Caco-2 (cell line): ENCODE measurements at regions of chr11 and their contacts with region 1.

Region 1: DNA sequence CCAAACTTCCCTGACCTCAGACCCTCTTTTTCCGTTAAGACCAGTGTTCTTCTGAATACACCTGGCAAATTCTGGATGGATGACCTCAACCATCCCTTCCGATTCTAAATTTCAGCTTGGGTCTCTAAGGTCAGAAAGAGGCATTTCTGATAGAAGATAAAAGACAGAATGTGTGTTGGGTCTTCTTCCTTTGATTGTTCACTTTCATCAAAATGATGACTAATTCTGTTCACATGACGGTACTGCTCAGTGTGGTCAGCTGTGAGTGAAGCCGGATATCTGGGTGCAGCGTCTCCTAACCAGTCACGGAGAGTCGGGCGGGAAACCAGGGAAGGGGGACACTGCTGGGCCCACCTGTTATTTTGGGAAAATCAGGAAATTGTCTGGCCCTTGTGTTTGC is 151.6 kb upstream of the NAV2 start:
- DNase-seq: no peak
- H3K4me3 ChIP-seq: no peak overlapping the region
- H3K4me3 Mint-ChIP-seq: no peak overlapping the region
- H3K27ac Mint-ChIP-seq: no peak overlapping the region
- H3K4me1 ChIP-seq: peaks cover 2% of the 10 kb centered on the region; the same call in 1 of the 2 replicates
- H3K4me1 Mint-ChIP-seq: peaks cover 2% of the 10 kb centered on the region
- H3K27me3 ChIP-seq: no peaks in the 10 kb centered on the region
- H3K27me3 Mint-ChIP-seq: no peaks in the 10 kb centered on the region
- CTCF ChIP-seq: no peak

Region 2: GRCh38 chr11:19511413-19512183 is 49.4 kb before region 1 on chr11:
- CTCF ChIA-PET with region 1: no interaction called
- POLR2A ChIA-PET with region 1: no interaction called
- intact Hi-C with region 1: no loop called
- DNase-seq: no peak
- H3K4me3 ChIP-seq: no peak overlapping the region
- H3K4me3 Mint-ChIP-seq: no peak overlapping the region
- H3K27ac Mint-ChIP-seq: no peak overlapping the region
- H3K4me1 ChIP-seq: peaks cover 36% of the 10 kb centered on the region
- H3K4me1 Mint-ChIP-seq: peaks cover 28% of the 10 kb centered on the region
- H3K27me3 ChIP-seq: no peaks in the 10 kb centered on the region
- H3K27me3 Mint-ChIP-seq: no peaks in the 10 kb centered on the region
- CTCF ChIP-seq: no peak

Region 3: GRCh38 chr11:19658344-19658743 is 97.3 kb after region 1 on chr11:
- CTCF ChIA-PET with region 1: interaction called, 5 read pairs
- POLR2A ChIA-PET with region 1: no interaction called
- intact Hi-C with region 1: loop called (anchors 5 kb)
- DNase-seq: no peak
- H3K4me3 ChIP-seq: no peak overlapping the region
- H3K4me3 Mint-ChIP-seq: no peak overlapping the region
- H3K27ac Mint-ChIP-seq: no peak overlapping the region
- H3K4me1 ChIP-seq: no peaks in the 10 kb centered on the region
- H3K4me1 Mint-ChIP-seq: no peaks in the 10 kb centered on the region
- H3K27me3 ChIP-seq: no peaks in the 10 kb centered on the region
- H3K27me3 Mint-ChIP-seq: no peaks in the 10 kb centered on the region
- CTCF ChIP-seq: no peak

Region 4: GRCh38 chr11:19742588-19743292 is 181.7 kb after region 1 on chr11:
- CTCF ChIA-PET with region 1: interaction called, 12 read pairs
- POLR2A ChIA-PET with region 1: no interaction called
- intact Hi-C with region 1: loop called (anchors 1 kb)
- DNase-seq: peak; percentile 82 to 84
- H3K4me3 ChIP-seq: no peak overlapping the region
- H3K4me3 Mint-ChIP-seq: no peak overlapping the region
- H3K27ac Mint-ChIP-seq: no peak overlapping the region
- H3K4me1 ChIP-seq: no peaks in the 10 kb centered on the region
- H3K4me1 Mint-ChIP-seq: no peaks in the 10 kb centered on the region
- H3K27me3 ChIP-seq: no peaks in the 10 kb centered on the region
- H3K27me3 Mint-ChIP-seq: no peaks in the 10 kb centered on the region
- CTCF ChIP-seq: peak; percentile 77 to 86

Region 5: DNA sequence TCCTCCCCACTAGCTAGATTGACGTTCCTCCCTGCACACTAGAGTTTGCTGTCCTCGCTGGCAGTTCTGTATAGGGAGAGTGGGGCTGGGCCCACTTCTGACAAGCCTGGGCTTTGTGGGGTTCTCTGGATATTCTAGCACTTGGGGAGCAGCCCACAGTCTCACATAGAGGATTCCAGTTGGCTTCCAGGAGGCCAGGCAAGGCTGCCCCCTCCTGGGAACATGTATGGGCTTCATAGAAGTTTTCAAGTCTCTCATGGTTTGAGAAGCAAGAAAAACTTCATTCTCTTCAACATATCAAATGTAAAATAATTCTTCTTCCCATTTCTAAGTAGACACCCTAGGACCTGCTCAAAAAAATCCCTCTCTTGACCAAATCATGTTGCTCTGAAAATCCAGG is 239.2 kb after region 1 on chr11:
- CTCF ChIA-PET with region 1: no interaction called
- POLR2A ChIA-PET with region 1: no interaction called
- intact Hi-C with region 1: loop called (anchors 2 kb)
- DNase-seq: no peak
- H3K4me3 ChIP-seq: no peak overlapping the region
- H3K4me3 Mint-ChIP-seq: no peak overlapping the region
- H3K27ac Mint-ChIP-seq: peak overlapping the region; percentile 23
- H3K4me1 ChIP-seq: peaks cover 49% of the 10 kb centered on the region
- H3K4me1 Mint-ChIP-seq: peaks cover 44% of the 10 kb centered on the region
- H3K27me3 ChIP-seq: no peaks in the 10 kb centered on the region
- H3K27me3 Mint-ChIP-seq: no peaks in the 10 kb centered on the region
- CTCF ChIP-seq: peak in 1 of 2 experiments; percentile 47

Region 6: GRCh38 chr11:19808076-19808911 is 247.3 kb after region 1 on chr11:
- CTCF ChIA-PET with region 1: no interaction called
- POLR2A ChIA-PET with region 1: no interaction called
- intact Hi-C with region 1: loop called (anchors 2 kb)
- DNase-seq: no peak
- H3K4me3 ChIP-seq: no peak overlapping the region
- H3K4me3 Mint-ChIP-seq: no peak overlapping the region
- H3K27ac Mint-ChIP-seq: no peak overlapping the region
- H3K4me1 ChIP-seq: peaks cover 29% of the 10 kb centered on the region
- H3K4me1 Mint-ChIP-seq: peaks cover 24% of the 10 kb centered on the region
- H3K27me3 ChIP-seq: no peaks in the 10 kb centered on the region
- H3K27me3 Mint-ChIP-seq: no peaks in the 10 kb centered on the region
- CTCF ChIP-seq: peak in 1 of 2 experiments; percentile 9